ENCODE measurements at regions of chr22 and their contacts with region 1.

Region 1: DNA sequence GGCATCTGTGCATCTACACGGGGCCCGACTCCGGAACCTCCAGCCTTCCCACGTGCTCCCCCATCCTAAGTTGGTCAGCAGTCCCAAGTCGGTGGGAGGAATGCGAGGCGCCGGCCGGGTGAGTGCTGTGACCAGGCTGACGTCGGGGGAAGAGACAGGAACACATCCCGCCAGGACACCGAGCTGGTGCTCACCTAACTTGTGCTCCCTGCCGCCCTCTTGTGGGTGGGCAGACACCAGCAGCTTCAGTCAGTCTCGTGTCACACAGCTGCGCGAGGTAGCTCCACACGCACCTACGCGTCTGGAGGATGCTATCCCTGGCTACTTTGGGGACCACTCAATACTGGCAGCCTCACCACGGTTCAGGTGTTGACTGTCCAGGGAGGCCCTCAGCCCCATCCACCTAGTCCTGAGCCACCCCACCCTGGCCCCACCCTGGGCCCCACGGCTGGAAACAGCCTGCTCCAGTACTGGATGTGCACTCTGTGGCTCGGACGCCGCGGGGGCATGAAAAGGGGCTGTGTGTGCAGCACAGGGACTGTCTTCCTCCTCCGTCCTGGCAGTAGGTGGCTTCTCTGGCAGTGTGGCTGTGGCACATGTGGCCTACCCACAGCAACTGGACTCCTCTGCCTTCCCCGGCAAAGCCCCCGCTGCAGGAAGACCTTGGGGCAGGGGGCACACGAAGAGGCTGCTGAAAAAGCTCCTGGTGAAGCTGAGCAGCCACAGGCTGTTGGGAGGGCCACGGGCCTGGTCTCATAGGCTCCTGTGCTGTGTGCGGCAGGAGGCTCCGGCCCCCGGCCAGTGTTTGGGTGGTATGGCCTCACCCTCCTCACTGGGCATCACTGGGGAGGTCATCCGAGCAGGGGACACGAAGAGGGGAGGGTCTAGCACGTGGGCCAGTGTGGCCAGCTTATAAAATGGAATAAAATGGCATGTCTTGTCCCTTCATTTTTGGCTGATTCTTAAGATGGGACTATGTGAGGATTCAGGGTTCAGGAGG is 11.2 kb upstream of the BID start:
- DNase-seq: peak; percentile 88
- ATAC-seq: peak; percentile 5

Region 2: DNA sequence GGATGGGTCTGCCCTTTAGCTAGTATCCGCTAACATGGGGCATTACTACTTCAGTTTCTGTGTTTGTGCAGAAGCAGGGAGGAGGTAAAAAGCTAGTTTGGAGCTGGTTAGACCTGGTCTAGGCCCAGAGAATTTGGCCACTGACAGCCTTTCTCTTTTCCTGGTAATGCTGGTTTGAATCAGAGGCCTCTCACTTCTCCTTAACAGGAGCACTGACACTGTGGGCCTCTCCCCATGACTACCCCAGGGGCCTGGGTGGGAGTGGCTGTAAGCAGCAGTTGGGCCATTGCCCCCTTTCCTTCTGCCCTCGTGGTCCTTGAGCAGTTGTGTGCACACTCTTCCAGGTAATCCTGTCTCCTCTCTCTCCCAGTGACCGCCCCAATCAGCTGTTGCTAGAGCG is 230.7 kb before region 1 on chr22:
- intact Hi-C with region 1: loop called (anchors 5 kb)
- DNase-seq: no peak
- ATAC-seq: no peak

Region 3: GRCh38 chr22:17742527-17742902 is 43.0 kb before region 1 on chr22:
- intact Hi-C with region 1: loop called (anchors 5 kb)
- DNase-seq: peak; percentile 74
- ATAC-seq: peak; percentile 63

Measured in Right ventricle myocardium inferior (tissue), 1 donor.